PC-9 (cell line): ENCODE measurements at regions of chr19 and their contacts with region 1.

Region 1: GRCh38 chr19:40836754-40837429 is 13.4 kb downstream of the CYP2A6 start:
- DNase-seq: no peak
- H3K4me3 ChIP-seq: no peak overlapping the region
- H3K27ac ChIP-seq: no peak overlapping the region
- H3K4me1 ChIP-seq: 0 out of 2 replicates have a peak, but pooled peaks cover 5% of the 10 kb centered on the region
- H3K27me3 ChIP-seq: no peaks in the 10 kb centered on the region
- CTCF ChIP-seq: no peak

Region 2: DNA sequence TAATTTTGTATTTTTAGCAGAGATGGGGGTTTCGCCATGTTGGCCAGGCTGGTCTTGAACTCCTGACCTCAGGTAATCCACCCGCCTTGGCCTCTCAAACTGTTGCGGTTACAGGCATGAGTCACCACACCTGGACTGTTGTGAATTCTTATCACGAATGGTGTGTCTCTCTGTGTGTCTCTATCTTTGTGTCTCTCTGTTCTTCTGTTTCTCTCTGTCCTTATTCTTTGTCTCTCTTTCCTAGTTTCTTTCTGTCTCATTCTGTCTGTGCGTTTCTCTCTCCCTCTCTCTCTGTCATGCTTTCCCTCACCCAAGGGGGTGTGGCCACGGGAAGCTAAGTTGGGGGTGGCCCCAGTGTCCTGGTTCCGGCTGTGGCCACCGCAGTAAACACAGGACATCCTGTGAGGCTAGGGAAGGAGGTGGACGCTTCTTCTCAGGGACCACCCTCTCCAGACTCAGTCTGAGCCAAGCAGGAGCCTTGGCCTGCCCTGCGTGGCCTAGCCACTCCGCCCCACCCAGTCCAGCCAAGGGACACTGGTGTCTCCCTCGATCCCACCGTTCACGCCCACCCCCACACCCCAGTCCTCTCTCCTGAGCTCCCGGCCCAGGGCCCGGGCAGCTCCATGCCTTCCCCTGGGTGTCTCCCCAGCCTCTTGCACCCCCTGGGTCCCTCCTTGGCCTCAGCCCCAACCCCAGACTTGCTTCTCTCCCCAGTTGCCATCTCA is 419.8 kb before region 1 on chr19:
- CTCF ChIA-PET with region 1: no interaction called
- POLR2A ChIA-PET with region 1: no interaction called
- intact Hi-C with region 1: no loop called
- DNase-seq: peak in 1 of 2 experiments; percentile 40
- H3K4me3 ChIP-seq: no peak overlapping the region
- H3K27ac ChIP-seq: no peak overlapping the region
- H3K4me1 ChIP-seq: peaks cover 8% of the 10 kb centered on the region
- H3K27me3 ChIP-seq: no peaks in the 10 kb centered on the region
- CTCF ChIP-seq: no peak

Region 3: GRCh38 chr19:41076286-41076685 is 239.4 kb after region 1 on chr19:
- CTCF ChIA-PET with region 1: interaction called, 10 read pairs
- POLR2A ChIA-PET with region 1: no interaction called
- intact Hi-C with region 1: no loop called
- DNase-seq: no peak
- H3K4me3 ChIP-seq: no peak overlapping the region
- H3K27ac ChIP-seq: no peak overlapping the region
- H3K4me1 ChIP-seq: no peaks in the 10 kb centered on the region
- H3K27me3 ChIP-seq: no peaks in the 10 kb centered on the region
- CTCF ChIP-seq: no peak